Activated CD4-positive, alpha-beta T cell treated with anti-CD3 and anti-CD28 coated beads for 36 hours (primary cell): ENCODE measurements at regions of chr1 and their contacts with region 1.

Region 1: GRCh38 chr1:54188291-54188690 is 11.5 kb downstream of the CYB5RL start:
- DNase-seq: no peak
- ATAC-seq: no peak
- H3K4me3 Mint-ChIP-seq: no peak overlapping the region
- H3K27ac Mint-ChIP-seq: no peak overlapping the region
- H3K4me1 Mint-ChIP-seq: no peaks in the 10 kb centered on the region
- H3K27me3 Mint-ChIP-seq: no peaks in the 10 kb centered on the region

Region 2: DNA sequence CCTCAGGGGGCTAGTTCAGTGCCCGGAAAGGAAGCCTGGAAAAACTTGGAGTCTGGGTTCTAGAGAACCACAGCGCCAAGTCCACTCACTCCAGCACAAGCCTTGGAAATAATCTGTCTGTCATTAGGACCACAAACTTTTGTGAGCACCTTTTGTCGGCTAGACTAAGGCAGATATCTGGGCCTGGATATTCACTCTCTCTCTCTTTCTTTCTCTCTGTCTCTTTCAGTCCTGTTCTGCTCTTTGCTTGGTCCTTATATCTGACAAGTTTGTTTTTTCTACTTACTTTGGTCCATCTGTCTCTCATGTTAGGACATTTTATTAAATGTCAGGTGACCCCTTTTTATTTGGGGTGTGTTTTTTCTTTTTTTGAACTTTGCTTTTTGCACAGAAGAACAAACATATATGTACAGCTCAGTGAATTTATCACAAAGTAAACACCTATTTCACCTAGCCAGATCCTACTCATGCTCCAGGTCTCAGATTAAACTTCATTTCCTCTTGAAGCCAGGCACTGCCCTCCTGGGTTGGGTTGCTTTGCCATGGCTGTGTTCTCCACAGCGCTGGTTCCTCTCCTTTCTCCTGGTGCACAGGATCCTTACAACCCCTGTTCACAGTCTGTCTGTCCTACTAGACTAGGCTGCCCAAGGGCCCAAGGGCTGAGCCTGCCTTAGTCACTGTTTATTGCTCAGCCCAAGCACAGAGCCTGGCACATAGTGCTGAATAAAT is 94.1 kb before region 1 on chr1:
- CTCF ChIA-PET with region 1: no interaction called
- POLR2A ChIA-PET with region 1: interaction called, 10 read pairs
- intact Hi-C with region 1: no loop called
- DNase-seq: no peak
- ATAC-seq: no peak
- H3K4me3 Mint-ChIP-seq: no peak overlapping the region
- H3K27ac Mint-ChIP-seq: no peak overlapping the region
- H3K4me1 Mint-ChIP-seq: no peaks in the 10 kb centered on the region
- H3K27me3 Mint-ChIP-seq: no peaks in the 10 kb centered on the region